H1 (cell line): ENCODE measurements at regions of chr6 and their contacts with region 1.

Region 1: GRCh38 chr6:21664314-21665109 is 71.0 kb downstream of the SOX4 start:
- DNase-seq: peak in 1 of 2 experiments; percentile 79
- H3K4me3 ChIP-seq: peak overlapping the region; percentile 49 to 95 (median 88)
- H3K27ac ChIP-seq: peak overlapping the region; percentile 87
- H3K4me1 ChIP-seq: peaks cover 0 to 6% (median 3%) of the 10 kb centered on the region in 4 experiments; a peak in 5 of 7 replicates
- H3K27me3 ChIP-seq: peaks cover 0 to 3% (median 0%) of the 10 kb centered on the region in 4 experiments; a peak in 1 of 7 replicates
- CTCF ChIP-seq: no peak
- EP300 ChIP-seq: peak in 1 of 2 experiments; percentile 69; a peak in 1 of 3 replicates
- POLR2A ChIP-seq: peak; percentile 7 to 73
- RAD21 ChIP-seq: peak in 1 of 2 experiments; percentile 8; a peak in 1 of 4 replicates

Region 2: GRCh38 chr6:21653905-21654304 is 10.6 kb before region 1 on chr6:
- CTCF ChIA-PET with region 1: no interaction called
- POLR2A ChIA-PET with region 1: interaction called, 32 read pairs
- DNase-seq: peak in 1 of 2 experiments; percentile 46
- H3K4me3 ChIP-seq: peak overlapping the region in 1 of 4 experiments; percentile 12; a peak in 1 of 8 replicates
- H3K27ac ChIP-seq: no peak overlapping the region
- H3K4me1 ChIP-seq: peaks cover 0 to 4% (median 1%) of the 10 kb centered on the region in 4 experiments; a peak in 3 of 7 replicates
- H3K27me3 ChIP-seq: no peaks in the 10 kb centered on the region
- CTCF ChIP-seq: peak in 1 of 3 experiments; percentile 2; a peak in 1 of 4 replicates
- EP300 ChIP-seq: no peak
- POLR2A ChIP-seq: no peak
- RAD21 ChIP-seq: no peak

Region 3: GRCh38 chr6:21678990-21679389 is 14.5 kb after region 1 on chr6:
- CTCF ChIA-PET with region 1: no interaction called
- POLR2A ChIA-PET with region 1: interaction called, 11 read pairs
- DNase-seq: peak in 1 of 2 experiments; percentile 42
- H3K4me3 ChIP-seq: no peak overlapping the region
- H3K27ac ChIP-seq: no peak overlapping the region
- H3K4me1 ChIP-seq: peaks cover 0 to 10% (median 4%) of the 10 kb centered on the region in 4 experiments; a peak in 2 of 7 replicates
- H3K27me3 ChIP-seq: no peaks in the 10 kb centered on the region
- CTCF ChIP-seq: no peak
- EP300 ChIP-seq: no peak
- POLR2A ChIP-seq: no peak
- RAD21 ChIP-seq: no peak